Activated CD4-positive, alpha-beta memory T cell treated with anti-CD3 and anti-CD28 coated beads, Interleukin-2, amount 10 ng/mL, durations not matched to agents 7 days and 5 days (primary cell): ENCODE measurements at regions of chr6 and their contacts with region 1.

Region 1: GRCh38 chr6:138007014-138007472 is 100.2 kb downstream of the PERP start:
- DNase-seq: peak; percentile 34
- H3K4me3 Mint-ChIP-seq: no peak overlapping the region
- H3K27ac Mint-ChIP-seq: no peak overlapping the region
- H3K4me1 Mint-ChIP-seq: peaks cover 14% of the 10 kb centered on the region
- H3K27me3 Mint-ChIP-seq: no peaks in the 10 kb centered on the region

Region 2: GRCh38 chr6:137697267-137697938 is 309.6 kb before region 1 on chr6:
- CTCF ChIA-PET with region 1: interaction called, 13 read pairs
- POLR2A ChIA-PET with region 1: no interaction called
- DNase-seq: no peak
- H3K4me3 Mint-ChIP-seq: no peak overlapping the region
- H3K27ac Mint-ChIP-seq: peak overlapping the region; percentile 52
- H3K4me1 Mint-ChIP-seq: peaks cover 53% of the 10 kb centered on the region
- H3K27me3 Mint-ChIP-seq: no peaks in the 10 kb centered on the region

Region 3: GRCh38 chr6:137995371-137995770 is 11.7 kb before region 1 on chr6:
- CTCF ChIA-PET with region 1: interaction called, 11 read pairs
- POLR2A ChIA-PET with region 1: no interaction called
- DNase-seq: no peak
- H3K4me3 Mint-ChIP-seq: no peak overlapping the region
- H3K27ac Mint-ChIP-seq: no peak overlapping the region
- H3K4me1 Mint-ChIP-seq: no peaks in the 10 kb centered on the region
- H3K27me3 Mint-ChIP-seq: peaks cover 4% of the 10 kb centered on the region

Region 4: GRCh38 chr6:138017166-138017757 is 10.2 kb after region 1 on chr6:
- CTCF ChIA-PET with region 1: interaction called, 15 read pairs
- POLR2A ChIA-PET with region 1: no interaction called
- DNase-seq: no peak
- H3K4me3 Mint-ChIP-seq: no peak overlapping the region
- H3K27ac Mint-ChIP-seq: no peak overlapping the region
- H3K4me1 Mint-ChIP-seq: no peaks in the 10 kb centered on the region
- H3K27me3 Mint-ChIP-seq: peaks cover 4% of the 10 kb centered on the region

Region 5: DNA sequence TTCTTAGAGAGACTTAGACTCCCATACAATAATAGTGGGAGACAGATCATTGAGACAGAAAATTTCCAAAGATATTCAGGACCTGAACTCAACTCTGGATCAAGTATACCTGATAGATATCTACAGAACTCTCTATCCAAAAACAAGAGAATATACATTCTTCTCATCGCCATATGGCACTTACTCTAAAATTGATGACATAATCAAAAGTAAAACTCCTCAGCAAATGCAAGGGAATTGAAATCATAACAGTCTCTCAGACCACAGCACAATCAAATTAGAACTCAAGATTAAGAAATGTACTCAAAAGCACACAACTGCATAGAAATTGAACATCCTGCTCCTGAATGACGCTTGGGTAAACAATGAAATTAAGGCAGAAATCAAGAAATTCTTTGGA is 71.4 kb after region 1 on chr6:
- CTCF ChIA-PET with region 1: no interaction called
- POLR2A ChIA-PET with region 1: no interaction called
- DNase-seq: no peak
- H3K4me3 Mint-ChIP-seq: no peak overlapping the region
- H3K27ac Mint-ChIP-seq: no peak overlapping the region
- H3K4me1 Mint-ChIP-seq: no peaks in the 10 kb centered on the region
- H3K27me3 Mint-ChIP-seq: peaks cover 26% of the 10 kb centered on the region